PC-9 (cell line): ENCODE measurements at regions of chr6 and their contacts with region 1.

Region 1: DNA sequence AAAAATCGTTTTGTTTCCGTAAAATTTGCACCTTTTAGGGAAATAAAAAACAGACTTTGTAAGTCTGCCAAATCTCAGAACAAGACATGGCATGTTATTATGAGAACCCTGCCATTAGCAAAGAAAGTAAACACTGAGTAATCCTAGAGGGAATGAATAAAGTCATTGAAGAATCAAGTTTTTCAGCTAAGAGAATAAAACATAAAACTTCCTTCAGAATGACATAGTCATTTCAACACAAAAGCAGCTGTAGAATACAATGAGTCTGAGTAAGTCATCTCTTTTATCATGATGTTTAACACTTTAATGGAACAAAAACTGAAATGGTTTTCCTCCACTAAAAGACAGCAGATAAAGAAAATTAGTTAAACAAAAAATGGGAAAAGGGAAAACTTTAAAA is 10.3 kb upstream of the DST start:
- DNase-seq: peak in 1 of 2 experiments; percentile 88
- H3K4me3 ChIP-seq: no peak overlapping the region
- H3K27ac ChIP-seq: peak overlapping the region; percentile 66
- H3K4me1 ChIP-seq: peaks cover 33% of the 10 kb centered on the region
- H3K27me3 ChIP-seq: no peaks in the 10 kb centered on the region
- CTCF ChIP-seq: no peak

Region 2: DNA sequence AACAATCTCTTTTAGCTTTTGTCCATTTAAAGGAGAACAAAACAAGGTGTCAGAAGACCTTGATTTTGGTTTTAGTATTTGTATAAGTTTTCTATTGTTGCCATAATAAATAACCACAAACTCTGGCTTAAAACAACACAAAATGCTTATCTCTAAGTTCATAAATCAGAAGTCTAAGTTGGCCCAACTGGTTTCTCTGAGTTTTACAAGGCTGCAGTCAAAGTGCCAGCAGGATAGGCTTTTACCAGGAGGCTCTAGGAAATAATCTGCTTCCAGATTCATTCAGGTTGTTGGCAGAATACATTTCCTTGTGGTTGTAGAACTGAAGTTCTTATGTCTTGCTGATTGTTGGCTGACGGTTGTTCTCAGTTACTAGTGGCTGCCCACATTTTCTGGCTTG is 926.9 kb before region 1 on chr6:
- CTCF ChIA-PET with region 1: no interaction called
- POLR2A ChIA-PET with region 1: no interaction called
- intact Hi-C with region 1: no loop called
- DNase-seq: peak in 1 of 2 experiments; percentile 1
- H3K4me3 ChIP-seq: no peak overlapping the region
- H3K27ac ChIP-seq: no peak overlapping the region
- H3K4me1 ChIP-seq: no peaks in the 10 kb centered on the region
- H3K27me3 ChIP-seq: no peaks in the 10 kb centered on the region
- CTCF ChIP-seq: no peak

Region 3: GRCh38 chr6:56693246-56693607 is 40.2 kb after region 1 on chr6:
- CTCF ChIA-PET with region 1: no interaction called
- POLR2A ChIA-PET with region 1: no interaction called
- intact Hi-C with region 1: loop called (anchors 2 kb)
- DNase-seq: peak in 1 of 2 experiments; percentile 69
- H3K4me3 ChIP-seq: no peak overlapping the region
- H3K27ac ChIP-seq: peak overlapping the region; percentile 53
- H3K4me1 ChIP-seq: peaks cover 37% of the 10 kb centered on the region
- H3K27me3 ChIP-seq: no peaks in the 10 kb centered on the region
- CTCF ChIP-seq: no peak